Mammary epithelial cell (primary cell): ENCODE measurements at regions of chr12 and their contacts with region 1.

Region 1: GRCh38 chr12:4710113-4710512 is 10.1 kb upstream of the GALNT8 start:
- DNase-seq: no peak
- H3K4me3 ChIP-seq: no peak overlapping the region
- H3K27ac ChIP-seq: no peak overlapping the region
- H3K4me1 ChIP-seq: no peaks in the 10 kb centered on the region
- H3K27me3 ChIP-seq: no peaks in the 10 kb centered on the region
- CTCF ChIP-seq: no peak

Region 2: DNA sequence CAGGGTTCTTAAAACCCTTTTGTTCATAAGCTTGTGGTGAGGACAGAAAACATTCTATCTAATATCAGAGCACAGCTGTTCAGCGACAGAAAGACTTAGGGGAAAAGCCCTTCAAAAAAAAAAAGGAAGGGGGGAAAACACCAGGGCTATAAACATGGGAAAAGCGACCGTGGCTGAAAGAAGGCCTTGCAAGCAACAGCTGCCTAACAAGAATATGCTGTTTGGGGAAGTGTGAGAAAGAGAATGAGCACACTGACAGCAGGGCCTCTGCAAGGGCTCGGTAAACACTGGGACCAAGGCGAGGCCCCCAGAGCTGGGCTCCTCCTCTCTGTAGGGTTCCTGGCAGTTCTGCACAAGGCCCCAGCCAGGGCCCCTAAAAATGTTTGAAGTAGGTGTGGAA is 464.0 kb before region 1 on chr12:
- CTCF ChIA-PET with region 1: no interaction called
- dilution Hi-C with region 1: no loop called
- in situ Hi-C with region 1: no loop called
- intact Hi-C with region 1: no loop called
- DNase-seq: no peak
- H3K4me3 ChIP-seq: no peak overlapping the region
- H3K27ac ChIP-seq: no peak overlapping the region
- H3K4me1 ChIP-seq: no peaks in the 10 kb centered on the region
- H3K27me3 ChIP-seq: no peaks in the 10 kb centered on the region
- CTCF ChIP-seq: no peak

Region 3: DNA sequence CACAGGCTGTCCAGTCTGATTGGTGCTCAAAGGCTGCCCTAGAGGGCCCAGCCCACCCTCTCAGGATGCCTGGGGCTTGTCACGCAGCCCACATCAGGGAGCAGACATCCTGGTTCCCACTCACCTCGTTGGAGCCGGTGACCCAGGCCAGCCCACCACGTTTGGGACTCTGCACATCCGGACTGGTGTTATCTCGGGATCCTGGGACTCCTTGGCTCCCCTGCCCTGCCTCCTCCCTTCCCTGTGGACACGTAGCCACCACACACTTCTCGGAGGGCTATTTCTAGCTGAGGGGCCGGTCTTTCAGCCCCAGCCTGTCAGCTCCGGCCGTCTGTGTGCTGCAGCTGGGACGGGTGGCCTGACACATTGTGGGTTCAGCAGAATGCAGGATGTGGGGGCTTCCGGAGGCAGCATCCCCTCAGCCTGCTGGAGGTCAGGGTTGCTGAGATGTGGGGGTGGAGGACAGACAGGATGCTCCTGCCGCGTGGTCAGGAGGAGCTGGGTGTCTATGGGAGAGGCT is 317.8 kb before region 1 on chr12:
- CTCF ChIA-PET with region 1: no interaction called
- dilution Hi-C with region 1: no loop called
- in situ Hi-C with region 1: no loop called
- intact Hi-C with region 1: no loop called
- DNase-seq: no peak
- H3K4me3 ChIP-seq: no peak overlapping the region
- H3K27ac ChIP-seq: no peak overlapping the region
- H3K4me1 ChIP-seq: no peaks in the 10 kb centered on the region
- H3K27me3 ChIP-seq: peaks cover 2% of the 10 kb centered on the region
- CTCF ChIP-seq: no peak

Region 4: GRCh38 chr12:4663971-4664505 is 46.1 kb before region 1 on chr12:
- CTCF ChIA-PET with region 1: no interaction called
- dilution Hi-C with region 1: loop called (anchors 5 kb)
- in situ Hi-C with region 1: no loop called
- intact Hi-C with region 1: no loop called
- DNase-seq: peak; percentile 61
- H3K4me3 ChIP-seq: no peak overlapping the region
- H3K27ac ChIP-seq: no peak overlapping the region
- H3K4me1 ChIP-seq: no peaks in the 10 kb centered on the region
- H3K27me3 ChIP-seq: no peaks in the 10 kb centered on the region
- CTCF ChIP-seq: no peak

Region 5: DNA sequence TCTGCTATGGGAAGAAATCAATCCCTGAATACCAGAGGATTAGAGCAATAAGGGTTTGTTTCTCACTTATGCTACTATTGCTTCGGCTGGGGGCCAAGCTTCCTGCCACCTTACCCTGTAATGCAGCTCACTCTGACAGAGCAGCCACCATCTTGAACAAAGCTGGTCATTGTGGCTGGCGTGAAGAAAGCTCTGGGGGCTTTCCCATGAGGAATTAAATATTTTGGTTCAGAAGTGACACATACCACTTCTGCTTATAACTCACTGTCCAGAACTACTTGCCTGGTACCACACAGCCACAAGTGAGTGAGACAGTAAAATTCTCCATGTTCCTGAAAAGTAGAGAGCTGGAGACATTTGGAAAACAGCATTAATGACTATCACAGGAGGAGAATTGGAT is 92.7 kb after region 1 on chr12:
- CTCF ChIA-PET with region 1: no interaction called
- dilution Hi-C with region 1: loop called (anchors 5 kb)
- in situ Hi-C with region 1: no loop called
- intact Hi-C with region 1: no loop called
- DNase-seq: no peak
- H3K4me3 ChIP-seq: no peak overlapping the region
- H3K27ac ChIP-seq: no peak overlapping the region
- H3K4me1 ChIP-seq: no peaks in the 10 kb centered on the region
- H3K27me3 ChIP-seq: peaks cover 12% of the 10 kb centered on the region
- CTCF ChIP-seq: no peak